ENCODE measurements at regions of chr9 and their contacts with region 1.

Region 1: DNA sequence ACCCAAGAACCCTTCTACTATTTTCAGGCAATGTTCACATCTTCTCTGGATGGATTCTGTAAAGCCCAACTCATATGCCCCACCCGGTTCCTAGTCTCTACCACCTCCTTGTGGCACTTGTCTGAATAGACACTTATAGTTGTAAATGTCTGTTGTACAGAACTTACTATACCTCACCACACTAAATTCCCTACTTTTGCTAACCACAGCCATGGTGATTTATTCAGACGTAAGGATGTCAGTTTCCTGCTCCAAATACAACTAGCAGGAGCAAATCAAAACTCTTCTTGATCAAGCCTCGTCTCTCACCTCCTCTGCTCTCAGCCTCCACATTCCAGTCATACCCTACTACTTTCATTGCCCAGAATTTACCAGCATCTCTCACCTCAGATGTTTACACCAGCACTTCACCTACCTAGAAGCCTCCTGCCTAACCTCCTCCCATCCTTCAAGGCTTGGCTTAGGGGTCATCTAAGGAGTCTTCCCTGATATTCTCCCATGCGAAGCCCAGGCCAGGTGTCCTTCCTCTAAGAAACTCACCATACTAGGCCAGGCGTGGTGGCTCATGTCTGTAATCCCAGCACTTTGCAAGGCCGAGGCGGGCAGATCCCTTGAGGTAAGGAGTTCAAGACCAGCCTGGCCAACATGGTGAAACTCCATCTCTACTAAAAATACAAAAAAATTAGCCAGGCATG is 75.5 kb downstream of the MAPKAP1 start:
- DNase-seq: no peak
- ATAC-seq: peak; percentile 75 to 85 (median 82)
- H3K4me3 ChIP-seq: no peak overlapping the region
- H3K27ac ChIP-seq: no peak overlapping the region
- H3K4me1 ChIP-seq: peaks cover 0 to 16% (median 7%) of the 10 kb centered on the region in 4 donors
- H3K27me3 ChIP-seq: no peaks in the 10 kb centered on the region
- CTCF ChIP-seq: peak; percentile 47 to 80 (median 64)
- POLR2A ChIP-seq: no peak

Region 2: DNA sequence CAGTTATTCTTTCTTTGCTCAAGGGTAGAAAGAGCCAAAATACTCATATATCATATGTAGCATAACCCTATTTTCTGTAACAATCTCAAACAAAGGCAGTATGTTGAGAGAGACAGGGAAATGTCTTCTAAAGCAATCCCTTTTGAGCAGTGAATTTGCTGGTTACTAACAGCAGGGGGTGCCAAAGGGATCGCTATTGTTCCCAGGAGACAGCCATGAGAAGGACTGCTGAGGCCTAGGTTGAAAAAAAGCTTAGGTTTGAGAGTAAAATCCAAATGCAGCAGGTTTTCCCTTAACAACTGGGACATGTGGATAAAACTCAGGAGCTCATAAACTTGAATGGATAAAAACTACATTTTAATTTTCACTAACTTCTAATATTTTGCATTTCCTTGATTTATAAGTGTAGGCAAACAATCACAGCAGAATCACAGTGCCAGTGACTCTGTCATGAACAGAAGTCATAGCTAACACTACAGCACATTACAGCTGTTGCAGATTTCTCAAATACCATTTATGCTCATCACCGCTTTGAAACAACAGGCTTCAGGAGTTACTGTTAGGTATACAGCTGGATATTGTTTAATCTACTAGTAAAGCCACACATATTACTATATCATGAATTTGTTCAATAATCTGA is 73.0 kb before region 1 on chr9:
- intact Hi-C with region 1: loop called in 1 of 2 experiments (anchors 10 kb)
- DNase-seq: peak in 1 of 3 donors; percentile 67
- ATAC-seq: peak; percentile 90 to 92 (median 92)
- H3K4me3 ChIP-seq: no peak overlapping the region
- H3K27ac ChIP-seq: peak overlapping the region in 1 of 3 donors; percentile 9
- H3K4me1 ChIP-seq: peaks cover 0 to 16% (median 0%) of the 10 kb centered on the region in 4 donors
- H3K27me3 ChIP-seq: no peaks in the 10 kb centered on the region
- CTCF ChIP-seq: peak; percentile 80 to 84 (median 81)
- POLR2A ChIP-seq: no peak

Measured in right lobe of liver (tissue), 6 donors.